Pancreas (tissue), 10 donors: ENCODE measurements at regions of chr22 and their contacts with region 1.

Region 1: GRCh38 chr22:35749808-35750207 is 32.1 kb downstream of the APOL5 start:
- DNase-seq: no peak
- ATAC-seq: no peak
- H3K4me3 ChIP-seq: no peak overlapping the region
- H3K27ac ChIP-seq: no peak overlapping the region
- H3K4me1 ChIP-seq: no peaks in the 10 kb centered on the region
- H3K27me3 ChIP-seq: no peaks in the 10 kb centered on the region
- CTCF ChIP-seq: no peak

Region 2: DNA sequence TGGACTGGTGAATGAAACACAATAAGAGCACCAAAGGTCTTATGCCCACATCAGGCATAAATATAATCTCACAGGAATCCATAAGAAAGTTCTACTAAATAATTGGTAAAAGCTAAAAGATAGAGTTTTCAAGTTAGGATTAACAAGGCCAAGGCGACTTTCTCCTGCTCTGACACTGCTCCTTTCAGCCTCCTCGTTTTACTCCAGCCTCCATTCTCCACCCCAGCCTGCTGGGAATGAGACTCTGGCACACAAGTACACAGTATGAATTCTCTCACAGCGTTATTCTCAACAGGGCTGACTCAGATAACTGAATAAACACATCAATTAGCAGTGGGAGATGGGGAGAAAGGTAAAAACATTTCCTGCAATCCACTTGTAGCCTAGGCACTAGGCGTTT is 62.8 kb after region 1 on chr22:
- intact Hi-C with region 1: no loop called
- DNase-seq: no peak
- ATAC-seq: peak in 1 of 4 donors; percentile 32
- H3K4me3 ChIP-seq: no peak overlapping the region
- H3K27ac ChIP-seq: no peak overlapping the region
- H3K4me1 ChIP-seq: no peaks in the 10 kb centered on the region
- H3K27me3 ChIP-seq: no peaks in the 10 kb centered on the region
- CTCF ChIP-seq: no peak

Region 3: GRCh38 chr22:35894937-35895708 is 145.3 kb after region 1 on chr22:
- intact Hi-C with region 1: loop called in 1 of 3 experiments (anchors 10 kb)
- DNase-seq: no peak
- ATAC-seq: peak in 3 of 4 donors; percentile 84 to 90 (median 87)
- H3K4me3 ChIP-seq: no peak overlapping the region
- H3K27ac ChIP-seq: no peak overlapping the region
- H3K4me1 ChIP-seq: peaks cover 7 to 10% (median 8%) of the 10 kb centered on the region in 3 donors
- H3K27me3 ChIP-seq: no peaks in the 10 kb centered on the region
- CTCF ChIP-seq: no peak

Region 4: DNA sequence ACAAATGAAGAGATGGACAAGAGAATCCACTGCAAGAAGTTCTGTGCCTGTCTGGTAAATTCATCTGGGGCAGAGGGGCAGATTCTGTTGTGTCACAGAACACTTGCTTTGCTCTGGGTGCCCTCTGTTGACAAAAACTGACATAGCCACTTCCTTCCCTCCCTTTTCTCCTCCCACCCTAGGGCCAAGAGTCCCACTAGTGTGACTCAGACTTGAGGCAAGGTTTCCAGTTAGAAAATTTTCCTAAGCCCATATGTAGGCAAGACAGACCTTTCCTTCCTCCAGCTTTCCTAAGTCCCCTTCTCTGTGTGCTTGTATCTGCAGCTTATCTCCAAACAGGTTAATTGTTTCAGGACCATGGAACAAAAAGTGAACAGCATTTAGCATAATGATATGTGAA is 172.0 kb after region 1 on chr22:
- intact Hi-C with region 1: no loop called
- DNase-seq: peak in 4 of 6 donors; percentile 39 to 75 (median 63)
- ATAC-seq: peak; percentile 88 to 98 (median 96)
- H3K4me3 ChIP-seq: no peak overlapping the region
- H3K27ac ChIP-seq: peak overlapping the region in 2 of 4 donors; percentile 39 to 53
- H3K4me1 ChIP-seq: peaks cover 0 to 4% (median 0%) of the 10 kb centered on the region in 3 donors
- H3K27me3 ChIP-seq: no peaks in the 10 kb centered on the region
- CTCF ChIP-seq: peak in 3 of 4 donors; percentile 27 to 54 (median 32)